ENCODE measurements at regions of chr5 and their contacts with region 1.

Region 1: GRCh38 chr5:55691265-55692105 is 20.6 kb downstream of the SLC38A9 start:
- DNase-seq: no peak
- ATAC-seq: peak; percentile 83

Region 2: DNA sequence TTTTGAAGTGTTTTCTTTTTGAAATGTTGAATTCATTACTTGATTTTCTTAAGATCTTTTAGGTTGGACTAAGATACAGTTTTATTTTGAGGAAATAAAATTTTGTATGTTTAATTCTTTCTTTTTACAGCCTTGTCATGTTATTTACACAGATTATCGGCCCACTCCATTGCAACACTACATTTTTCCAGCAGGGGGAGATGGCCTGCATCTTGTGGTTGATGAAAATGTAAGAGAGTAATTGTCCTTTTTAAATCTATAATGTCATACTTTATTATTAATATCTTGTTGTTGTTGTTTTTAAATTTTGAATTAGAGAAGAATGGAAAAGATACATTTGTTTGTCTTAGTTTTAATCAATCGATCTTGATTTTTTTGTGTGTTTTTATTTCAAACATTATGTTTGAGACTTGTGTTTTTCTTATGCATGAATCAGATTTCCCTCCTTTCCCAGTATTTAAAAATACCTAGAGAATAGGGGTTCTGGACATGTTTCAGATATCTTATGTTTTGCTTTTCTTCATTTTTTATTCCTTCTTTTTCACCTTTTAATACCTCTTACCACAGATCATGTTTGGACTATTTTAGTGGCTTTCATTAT is 347.0 kb before region 1 on chr5:
- intact Hi-C with region 1: loop called (anchors 10 kb)
- DNase-seq: no peak
- ATAC-seq: no peak

Region 3: DNA sequence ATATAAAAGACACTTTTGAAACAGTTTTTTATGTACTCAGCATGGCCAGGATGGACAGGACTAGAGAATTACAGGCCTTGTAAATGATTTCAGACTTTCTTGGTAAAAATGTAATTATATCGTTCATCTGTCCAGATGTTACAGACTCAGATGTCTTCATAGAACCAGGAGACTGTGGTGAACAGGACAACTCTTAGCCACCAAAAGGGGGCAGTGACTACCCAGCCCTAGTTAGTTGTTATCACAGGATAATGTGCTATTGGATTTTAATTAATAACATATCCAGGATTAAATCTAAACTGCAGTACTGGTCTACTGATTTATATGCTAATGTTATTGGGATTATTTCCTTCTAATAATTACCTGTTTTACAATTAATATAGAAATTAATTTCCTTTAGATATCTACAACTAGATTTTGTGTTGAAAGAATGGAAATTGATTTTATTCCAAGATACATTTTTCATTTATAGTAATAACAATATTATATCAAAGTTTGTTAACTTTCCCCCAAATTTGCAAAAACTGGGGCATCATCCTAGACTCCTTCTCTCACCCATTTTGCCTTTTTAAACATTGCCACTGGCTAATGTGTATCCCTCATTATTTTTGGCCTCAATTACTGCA is 284.3 kb before region 1 on chr5:
- intact Hi-C with region 1: loop called (anchors 5 kb)
- DNase-seq: no peak
- ATAC-seq: peak; percentile 83

Region 4: DNA sequence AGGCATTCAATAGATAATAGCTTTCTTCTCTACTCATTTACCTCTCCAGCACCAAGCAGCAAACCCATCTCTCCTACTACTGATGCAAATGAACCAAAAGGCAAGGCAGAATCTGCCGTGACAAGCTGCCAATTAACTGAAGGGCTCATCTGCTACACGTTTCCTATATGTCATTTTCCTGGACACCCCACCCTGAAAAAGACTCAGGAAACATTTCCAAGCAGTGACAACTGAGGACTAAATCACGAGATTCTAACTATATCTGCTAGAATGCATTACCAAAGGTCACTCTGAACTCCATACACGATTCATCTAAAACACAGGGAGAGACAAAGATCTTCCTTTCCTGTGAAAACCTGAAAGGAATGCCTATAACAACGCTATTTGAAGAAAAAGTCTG is 169.6 kb before region 1 on chr5:
- intact Hi-C with region 1: no loop called
- DNase-seq: no peak
- ATAC-seq: peak; percentile 40

Region 5: GRCh38 chr5:55601204-55601618 is 90.3 kb before region 1 on chr5:
- intact Hi-C with region 1: loop called (anchors 5 kb)
- DNase-seq: peak; percentile 89
- ATAC-seq: peak; percentile 89